Endothelial cell of umbilical vein (primary cell): ENCODE measurements at regions of chr10 and their contacts with region 1.

Region 1: GRCh38 chr10:4241724-4242345 is 456.8 kb upstream of the KLF6 start:
- DNase-seq: peak; percentile 89
- H3K4me3 ChIP-seq: peak overlapping the region in 1 of 3 experiments; percentile 63
- H3K27ac ChIP-seq: peak overlapping the region; percentile 99
- H3K4me1 ChIP-seq: peaks cover 50% of the 10 kb centered on the region
- H3K27me3 ChIP-seq: no peaks in the 10 kb centered on the region
- CTCF ChIP-seq: no peak
- POLR2A ChIP-seq: no peak

Region 2: GRCh38 chr10:3467052-3467951 is 774.5 kb before region 1 on chr10:
- CTCF ChIA-PET with region 1: no interaction called
- POLR2A ChIA-PET with region 1: no interaction called
- dilution Hi-C with region 1: no loop called
- intact Hi-C with region 1: loop called (anchors 1 kb)
- DNase-seq: peak; percentile 99
- H3K4me3 ChIP-seq: peak overlapping the region in 1 of 3 experiments; percentile 45
- H3K27ac ChIP-seq: peak overlapping the region; percentile 100
- H3K4me1 ChIP-seq: peaks cover 44% of the 10 kb centered on the region
- H3K27me3 ChIP-seq: no peaks in the 10 kb centered on the region
- CTCF ChIP-seq: peak; percentile 63 to 71
- POLR2A ChIP-seq: peak; percentile 18

Region 3: GRCh38 chr10:3852147-3852904 is 389.5 kb before region 1 on chr10:
- CTCF ChIA-PET with region 1: no interaction called
- POLR2A ChIA-PET with region 1: no interaction called
- dilution Hi-C with region 1: no loop called
- intact Hi-C with region 1: loop called (anchors 1 kb)
- DNase-seq: peak; percentile 98
- H3K4me3 ChIP-seq: no peak overlapping the region
- H3K27ac ChIP-seq: peak overlapping the region; percentile 93
- H3K4me1 ChIP-seq: peaks cover 23% of the 10 kb centered on the region
- H3K27me3 ChIP-seq: no peaks in the 10 kb centered on the region
- CTCF ChIP-seq: no peak
- POLR2A ChIP-seq: no peak

Region 4: DNA sequence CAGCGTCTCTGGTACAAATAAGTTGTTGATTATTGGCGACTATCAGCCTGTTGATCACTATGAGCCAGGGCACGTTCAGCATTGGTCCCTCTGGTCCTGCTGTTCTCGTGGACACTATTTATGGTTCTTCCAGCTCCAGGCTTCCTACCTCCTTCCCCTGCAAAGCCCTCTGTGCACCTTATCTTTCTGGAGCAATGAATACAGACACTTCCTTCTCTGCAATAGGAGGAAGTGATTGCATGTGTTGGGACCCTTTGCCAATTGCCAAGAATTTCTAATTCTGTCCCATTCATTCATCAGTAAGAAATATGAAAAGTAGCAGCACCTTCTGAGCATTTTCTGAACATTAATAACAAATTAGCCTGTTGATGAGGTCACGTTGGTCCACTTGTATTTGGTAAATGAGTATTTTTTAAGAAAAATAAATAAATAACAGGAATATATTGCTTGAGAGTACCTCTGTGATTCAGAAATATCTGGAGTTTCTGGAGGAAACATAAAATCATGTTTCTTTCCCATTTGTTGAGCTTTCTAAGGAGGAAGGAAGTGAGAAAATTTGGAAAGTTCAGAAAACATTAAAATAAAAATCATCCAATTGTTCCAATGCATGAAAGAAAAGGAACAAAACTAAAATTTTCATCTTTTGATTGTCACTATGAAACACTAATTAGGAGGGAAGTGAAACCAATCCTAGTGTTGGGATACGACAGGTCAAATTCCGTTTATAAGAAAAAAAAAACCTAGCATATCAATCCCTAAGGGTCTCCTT is 197.8 kb before region 1 on chr10:
- CTCF ChIA-PET with region 1: no interaction called
- POLR2A ChIA-PET with region 1: no interaction called
- dilution Hi-C with region 1: no loop called
- intact Hi-C with region 1: loop called (anchors 1 kb)
- DNase-seq: peak; percentile 97
- H3K4me3 ChIP-seq: no peak overlapping the region
- H3K27ac ChIP-seq: peak overlapping the region; percentile 66
- H3K4me1 ChIP-seq: peaks cover 21% of the 10 kb centered on the region
- H3K27me3 ChIP-seq: no peaks in the 10 kb centered on the region
- CTCF ChIP-seq: no peak
- POLR2A ChIP-seq: peak; percentile 67

Region 5: GRCh38 chr10:4291990-4292389 is 50.2 kb after region 1 on chr10:
- CTCF ChIA-PET with region 1: no interaction called
- POLR2A ChIA-PET with region 1: no interaction called
- dilution Hi-C with region 1: no loop called
- intact Hi-C with region 1: no loop called
- DNase-seq: no peak
- H3K4me3 ChIP-seq: no peak overlapping the region
- H3K27ac ChIP-seq: no peak overlapping the region
- H3K4me1 ChIP-seq: no peaks in the 10 kb centered on the region
- H3K27me3 ChIP-seq: no peaks in the 10 kb centered on the region
- CTCF ChIP-seq: no peak
- POLR2A ChIP-seq: no peak

Region 6: GRCh38 chr10:4353964-4354363 is 112.1 kb after region 1 on chr10:
- CTCF ChIA-PET with region 1: no interaction called
- POLR2A ChIA-PET with region 1: no interaction called
- dilution Hi-C with region 1: no loop called
- intact Hi-C with region 1: loop called (anchors 1 kb)
- DNase-seq: peak; percentile 96
- H3K4me3 ChIP-seq: no peak overlapping the region
- H3K27ac ChIP-seq: peak overlapping the region; percentile 94
- H3K4me1 ChIP-seq: peaks cover 46% of the 10 kb centered on the region
- H3K27me3 ChIP-seq: no peaks in the 10 kb centered on the region
- CTCF ChIP-seq: no peak
- POLR2A ChIP-seq: no peak

Region 7: GRCh38 chr10:4656576-4657182 is 414.8 kb after region 1 on chr10:
- CTCF ChIA-PET with region 1: interaction called, 3 read pairs
- POLR2A ChIA-PET with region 1: no interaction called
- dilution Hi-C with region 1: no loop called
- intact Hi-C with region 1: loop called (anchors 1 kb)
- DNase-seq: peak; percentile 80
- H3K4me3 ChIP-seq: no peak overlapping the region
- H3K27ac ChIP-seq: peak overlapping the region; percentile 47
- H3K4me1 ChIP-seq: peaks cover 4% of the 10 kb centered on the region
- H3K27me3 ChIP-seq: no peaks in the 10 kb centered on the region
- CTCF ChIP-seq: peak; percentile 77 to 82
- POLR2A ChIP-seq: no peak